Sigmoid colon (tissue), 7 donors: ENCODE measurements at regions of chr5 and their contacts with region 1.

Region 1: DNA sequence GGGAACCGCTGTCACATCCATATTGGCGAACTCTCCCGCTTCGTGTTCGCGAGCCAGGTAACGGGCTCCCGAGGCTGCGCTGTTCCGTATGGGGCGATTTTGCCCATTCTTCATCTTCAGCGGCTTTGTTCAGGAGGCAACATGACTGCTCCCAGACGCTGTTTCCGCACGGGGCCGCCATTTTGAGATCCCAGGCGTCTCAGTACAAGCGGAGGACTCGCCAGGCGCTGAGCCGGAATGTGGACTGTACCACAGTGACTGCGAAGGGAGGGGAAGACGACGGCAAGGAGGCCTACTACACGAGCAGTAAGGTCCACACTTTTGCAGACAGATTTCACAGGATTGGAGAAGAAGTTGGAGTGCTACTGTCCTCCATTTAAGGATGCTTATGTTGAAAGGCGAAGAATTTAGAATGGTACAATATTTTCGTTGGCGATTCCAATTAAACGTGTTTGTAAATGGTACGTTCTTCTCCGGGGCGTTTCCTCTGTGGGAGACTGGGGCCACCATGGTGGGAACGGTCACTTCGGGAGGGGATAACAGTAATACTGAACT is 41.6 kb upstream of the ZNF300 start:
- DNase-seq: peak; percentile 94
- H3K4me3 ChIP-seq: peak overlapping the region; percentile 51 to 65 (median 59)
- H3K27ac ChIP-seq: peak overlapping the region; percentile 76 to 82 (median 79)
- H3K4me1 ChIP-seq: no peaks in the 10 kb centered on the region
- H3K27me3 ChIP-seq: no peaks in the 10 kb centered on the region
- CTCF ChIP-seq: no peak
- EP300 ChIP-seq: no peak
- POLR2A ChIP-seq: no peak

Region 2: GRCh38 chr5:150904479-150905318 is 41.7 kb before region 1 on chr5 and contains the start of gene ZNF300:
- intact Hi-C with region 1: loop called (anchors 2 kb)
- DNase-seq: peak; percentile 89
- H3K4me3 ChIP-seq: peak within 1 kb of the TSS; percentile 42 to 56 (median 52)
- H3K27ac ChIP-seq: peak within 1 kb of the TSS; percentile 58 to 75 (median 70)
- H3K4me1 ChIP-seq: peaks cover 0 to 3% (median 0%) of the 10 kb centered on the region in 4 donors
- H3K27me3 ChIP-seq: no peaks in the 10 kb centered on the region
- CTCF ChIP-seq: no peak
- EP300 ChIP-seq: no peak
- POLR2A ChIP-seq: no peak
- total RNA-seq, gene ZNF300: 3.5 to 6.1 (median 4.4) TPM